Heart right ventricle (tissue), 16 donors: ENCODE measurements at regions of chr4 and their contacts with region 1.

Region 1: GRCh38 chr4:138595731-138596460 is 353.7 kb upstream of the SLC7A11 start:
- DNase-seq: peak in 1 of 2 donors; percentile 26
- ATAC-seq: peak in 7 of 8 donors; percentile 55 to 92 (median 83)
- H3K4me3 ChIP-seq: no peak overlapping the region
- H3K27ac ChIP-seq: peak overlapping the region in 3 of 10 donors; percentile 4 to 27 (median 7)
- H3K4me1 ChIP-seq: peaks cover 0 to 41% (median 12%) of the 10 kb centered on the region in 9 donors
- H3K27me3 ChIP-seq: no peaks in the 10 kb centered on the region
- CTCF ChIP-seq: no peak

Region 2: DNA sequence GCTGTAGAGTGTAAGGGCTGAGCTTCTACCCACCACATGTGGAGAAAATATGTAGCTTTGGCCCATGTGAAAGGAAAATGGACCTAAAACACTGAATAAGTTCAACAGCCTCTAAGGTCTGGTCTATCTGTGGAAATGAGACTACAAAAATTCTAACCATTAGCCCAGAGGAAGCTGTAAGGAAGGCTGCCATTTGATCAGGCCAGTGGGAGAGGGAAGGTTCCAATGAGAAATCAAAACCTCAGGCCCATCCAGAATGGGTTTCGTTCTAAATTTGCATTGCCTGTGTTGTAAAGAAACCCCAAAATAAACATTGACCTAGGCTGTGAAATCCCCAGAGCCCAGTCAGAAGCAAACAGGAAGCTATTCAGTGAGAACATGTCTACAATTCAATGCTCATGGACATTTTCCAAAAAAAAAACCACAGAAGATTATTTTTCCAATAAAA is 33.3 kb before region 1 on chr4:
- intact Hi-C with region 1: loop called in 1 of 10 experiments (anchors 5 kb)
- DNase-seq: peak in 1 of 2 donors; percentile 42
- ATAC-seq: peak in 6 of 8 donors; percentile 77 to 95 (median 84)
- H3K4me3 ChIP-seq: no peak overlapping the region
- H3K27ac ChIP-seq: peak overlapping the region in 7 of 10 donors; percentile 35 to 86 (median 59)
- H3K4me1 ChIP-seq: peaks cover 0 to 17% (median 8%) of the 10 kb centered on the region in 9 donors
- H3K27me3 ChIP-seq: no peaks in the 10 kb centered on the region
- CTCF ChIP-seq: no peak